Activated CD4-positive, alpha-beta memory T cell treated with anti-CD3 and anti-CD28 coated beads, Interleukin-2, amount 10 ng/mL, durations not matched to agents 7 days and 5 days (primary cell): ENCODE measurements at regions of chr2 and their contacts with region 1.

Region 1: GRCh38 chr2:219253753-219254590 is at the start of gene TUBA4A:
- DNase-seq: peak; percentile 92
- H3K4me3 Mint-ChIP-seq: peak within 1 kb of the TSS; percentile 100
- H3K27ac Mint-ChIP-seq: peak within 1 kb of the TSS; percentile 81
- H3K4me1 Mint-ChIP-seq: peaks cover 47% of the 10 kb centered on the region
- H3K27me3 Mint-ChIP-seq: peaks cover 2% of the 10 kb centered on the region
- total RNA-seq, gene TUBA4A: 313 to 344 TPM

Region 2: DNA sequence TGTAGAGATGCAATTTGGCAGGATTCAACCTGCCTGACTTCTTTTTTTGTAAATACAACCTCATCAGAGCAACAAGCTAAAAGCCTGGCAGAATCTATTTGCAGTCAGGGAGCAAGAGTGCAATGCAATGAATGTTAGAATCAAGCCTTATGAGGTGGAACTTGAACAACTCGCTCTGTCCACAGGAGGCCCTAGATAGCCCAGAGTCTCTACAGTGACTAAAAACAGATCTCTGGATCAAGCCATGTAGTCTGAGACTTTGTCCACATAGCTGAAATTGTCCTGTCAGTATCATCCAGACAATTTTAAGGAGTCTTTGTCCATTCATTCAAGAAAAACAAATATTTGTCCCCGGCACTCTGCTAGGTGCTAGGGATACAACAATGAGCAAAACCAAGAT is 326.6 kb before region 1 on chr2:
- CTCF ChIA-PET with region 1: no interaction called
- POLR2A ChIA-PET with region 1: no interaction called
- DNase-seq: no peak
- H3K4me3 Mint-ChIP-seq: no peak overlapping the region
- H3K27ac Mint-ChIP-seq: no peak overlapping the region
- H3K4me1 Mint-ChIP-seq: no peaks in the 10 kb centered on the region
- H3K27me3 Mint-ChIP-seq: peaks cover 13% of the 10 kb centered on the region

Region 3: DNA sequence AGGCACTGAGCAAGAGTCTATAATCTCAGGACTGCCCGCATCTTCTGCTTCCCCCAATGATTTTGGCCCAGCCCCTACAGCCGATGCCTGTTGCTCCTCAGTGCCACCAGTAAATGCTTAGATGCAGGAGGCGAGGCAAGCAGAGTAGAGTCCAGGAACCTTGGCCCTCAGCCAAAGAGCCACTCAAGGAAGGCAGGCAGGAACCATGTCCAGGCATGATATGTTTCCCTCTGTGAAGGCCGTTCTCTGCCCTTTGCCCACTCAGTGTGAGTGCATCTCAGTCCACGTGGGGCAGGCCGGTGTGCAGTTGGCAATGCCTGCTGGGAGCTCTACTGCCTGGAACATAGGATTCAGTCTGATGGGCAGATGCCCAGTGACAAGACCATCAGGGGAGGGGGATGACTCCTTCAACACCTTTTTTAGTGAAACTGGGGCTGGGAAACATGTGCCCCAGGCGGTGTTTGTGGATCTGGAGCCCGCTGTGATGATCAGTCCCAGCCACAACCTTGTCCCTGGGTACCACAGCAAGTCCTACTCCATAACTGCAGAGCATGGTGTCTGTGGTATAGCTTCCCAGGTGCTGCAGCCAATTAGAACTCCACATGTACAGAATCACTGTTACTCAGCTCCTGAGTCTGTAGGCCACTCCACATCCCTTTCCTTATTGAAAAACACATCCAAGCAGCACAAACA is 15.5 kb after region 1 on chr2:
- CTCF ChIA-PET with region 1: interaction called, 4 read pairs
- POLR2A ChIA-PET with region 1: interaction called, 13 read pairs
- DNase-seq: no peak
- H3K4me3 Mint-ChIP-seq: no peak overlapping the region
- H3K27ac Mint-ChIP-seq: no peak overlapping the region
- H3K4me1 Mint-ChIP-seq: no peaks in the 10 kb centered on the region
- H3K27me3 Mint-ChIP-seq: peaks cover 12% of the 10 kb centered on the region

Region 4: GRCh38 chr2:219388127-219388844 is 134.3 kb after region 1 on chr2:
- CTCF ChIA-PET with region 1: no interaction called
- POLR2A ChIA-PET with region 1: interaction called, 17 read pairs
- DNase-seq: peak; percentile 98
- H3K4me3 Mint-ChIP-seq: peak overlapping the region; percentile 70
- H3K27ac Mint-ChIP-seq: peak overlapping the region; percentile 67
- H3K4me1 Mint-ChIP-seq: peaks cover 16% of the 10 kb centered on the region
- H3K27me3 Mint-ChIP-seq: peaks cover 9% of the 10 kb centered on the region